MCF 10A (cell line): ENCODE measurements at regions of chr21 and their contacts with region 1.

Region 1: GRCh38 chr21:42593007-42593806 is 60.2 kb upstream of the PDE9A start:
- DNase-seq: peak; percentile 72
- H3K4me3 Mint-ChIP-seq: no peak overlapping the region
- H3K27ac Mint-ChIP-seq: no peak overlapping the region
- H3K4me1 Mint-ChIP-seq: no peaks in the 10 kb centered on the region
- H3K27me3 Mint-ChIP-seq: peaks cover 17% of the 10 kb centered on the region
- CTCF ChIP-seq: peak; percentile 93

Region 2: GRCh38 chr21:42666023-42666747 is 73.0 kb after region 1 on chr21:
- CTCF ChIA-PET with region 1: no interaction called
- POLR2A ChIA-PET with region 1: no interaction called
- intact Hi-C with region 1: no loop called
- DNase-seq: no peak
- H3K4me3 Mint-ChIP-seq: no peak overlapping the region
- H3K27ac Mint-ChIP-seq: no peak overlapping the region
- H3K4me1 Mint-ChIP-seq: no peaks in the 10 kb centered on the region
- H3K27me3 Mint-ChIP-seq: no peaks in the 10 kb centered on the region
- CTCF ChIP-seq: no peak

Region 3: GRCh38 chr21:42809171-42809928 is 216.1 kb after region 1 on chr21:
- CTCF ChIA-PET with region 1: interaction called, 13 read pairs
- POLR2A ChIA-PET with region 1: no interaction called
- intact Hi-C with region 1: no loop called
- DNase-seq: no peak
- H3K4me3 Mint-ChIP-seq: no peak overlapping the region
- H3K27ac Mint-ChIP-seq: no peak overlapping the region
- H3K4me1 Mint-ChIP-seq: no peaks in the 10 kb centered on the region
- H3K27me3 Mint-ChIP-seq: peaks cover 16% of the 10 kb centered on the region
- CTCF ChIP-seq: no peak

Region 4: DNA sequence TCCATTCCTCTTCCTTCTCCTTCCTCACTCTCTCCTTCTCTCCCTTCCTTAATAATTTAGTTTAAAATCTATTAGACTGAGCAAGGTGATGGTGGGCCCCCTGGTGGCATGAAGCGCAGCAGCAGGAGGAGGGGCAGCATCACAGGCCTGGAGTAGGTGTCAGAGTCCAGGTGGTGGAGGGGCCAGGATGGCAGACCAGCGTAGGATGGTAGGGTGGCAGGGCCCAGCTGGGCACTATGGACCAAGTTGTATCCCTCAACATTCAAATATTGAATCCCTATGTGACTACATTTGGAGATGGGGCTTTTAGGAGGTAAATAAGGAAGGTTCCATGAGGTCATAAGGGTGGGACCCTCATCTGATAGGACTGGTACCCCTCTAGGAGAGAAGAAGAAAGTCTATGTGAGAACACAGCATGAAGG is 225.1 kb after region 1 on chr21:
- CTCF ChIA-PET with region 1: interaction called, 28 read pairs
- POLR2A ChIA-PET with region 1: interaction called, 8 read pairs
- intact Hi-C with region 1: loop called (anchors 2 kb)
- DNase-seq: peak; percentile 55
- H3K4me3 Mint-ChIP-seq: no peak overlapping the region
- H3K27ac Mint-ChIP-seq: no peak overlapping the region
- H3K4me1 Mint-ChIP-seq: no peaks in the 10 kb centered on the region
- H3K27me3 Mint-ChIP-seq: no peaks in the 10 kb centered on the region
- CTCF ChIP-seq: peak; percentile 81